Activated CD8-positive, alpha-beta T cell treated with anti-CD3 and anti-CD28 coated beads for 36 hours (primary cell): ENCODE measurements at regions of chr10 and their contacts with region 1.

Region 1: DNA sequence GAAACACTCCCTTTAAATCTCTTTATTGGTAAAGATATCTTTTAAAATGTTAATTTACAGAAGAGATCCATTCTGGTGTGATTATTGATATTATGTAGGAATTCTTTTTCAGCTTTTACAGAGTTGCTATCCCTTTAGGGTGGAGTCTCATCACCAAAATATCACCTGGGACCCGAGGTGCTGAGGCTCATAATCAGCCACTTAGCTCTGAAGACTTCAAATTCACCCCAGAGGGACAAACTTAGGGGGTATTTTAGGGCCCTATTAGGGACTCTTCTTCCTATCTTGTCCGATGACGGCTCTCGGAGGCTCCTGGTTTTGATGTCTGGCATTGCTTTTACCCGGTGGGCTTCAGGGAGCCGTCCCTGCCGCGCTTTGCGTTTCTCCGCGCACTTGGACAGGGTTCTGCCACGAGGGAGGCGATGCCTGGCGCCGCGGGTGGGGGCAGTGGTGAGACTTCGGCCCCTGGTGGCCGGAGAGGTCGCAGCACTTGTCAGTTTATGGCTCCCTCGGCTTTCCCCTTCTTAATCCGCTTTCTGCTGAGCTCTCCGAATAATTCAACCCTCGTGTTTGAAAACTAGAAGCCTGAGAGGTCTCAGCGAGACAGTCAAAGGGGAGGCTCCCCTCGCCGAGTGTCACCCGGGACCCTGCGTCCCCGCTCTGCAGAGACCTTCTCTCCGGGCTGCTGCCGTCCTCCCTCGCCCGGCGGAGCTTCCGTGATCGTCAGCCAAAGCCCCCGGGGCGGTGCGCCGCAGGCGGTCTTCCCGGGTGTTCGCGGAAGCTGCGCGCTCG is 27.8 kb downstream of the RBM20 start:
- DNase-seq: peak; percentile 82
- ATAC-seq: peak; percentile 97
- H3K4me3 Mint-ChIP-seq: peak overlapping the region; percentile 80
- H3K27ac Mint-ChIP-seq: peak overlapping the region; percentile 82
- H3K4me1 Mint-ChIP-seq: peaks cover 4% of the 10 kb centered on the region
- H3K27me3 Mint-ChIP-seq: peaks cover 3% of the 10 kb centered on the region
- CTCF ChIP-seq: peak; percentile 83

Region 2: GRCh38 chr10:110617425-110618229 is 54.4 kb before region 1 on chr10:
- CTCF ChIA-PET with region 1: interaction called, 81 read pairs
- POLR2A ChIA-PET with region 1: interaction called, 9 read pairs
- intact Hi-C with region 1: loop called (anchors 2 kb)
- DNase-seq: peak; percentile 61
- ATAC-seq: peak; percentile 61
- H3K4me3 Mint-ChIP-seq: no peak overlapping the region
- H3K27ac Mint-ChIP-seq: peak overlapping the region; percentile 91
- H3K4me1 Mint-ChIP-seq: peaks cover 64% of the 10 kb centered on the region
- H3K27me3 Mint-ChIP-seq: no peaks in the 10 kb centered on the region
- CTCF ChIP-seq: no peak

Region 3: GRCh38 chr10:110657968-110658691 is 13.9 kb before region 1 on chr10:
- CTCF ChIA-PET with region 1: interaction called, 31 read pairs
- POLR2A ChIA-PET with region 1: no interaction called
- intact Hi-C with region 1: no loop called
- DNase-seq: no peak
- ATAC-seq: no peak
- H3K4me3 Mint-ChIP-seq: no peak overlapping the region
- H3K27ac Mint-ChIP-seq: no peak overlapping the region
- H3K4me1 Mint-ChIP-seq: peaks cover 5% of the 10 kb centered on the region
- H3K27me3 Mint-ChIP-seq: peaks cover 18% of the 10 kb centered on the region
- CTCF ChIP-seq: no peak

Region 4: GRCh38 chr10:111034598-111035310 is 362.8 kb after region 1 on chr10:
- CTCF ChIA-PET with region 1: no interaction called
- POLR2A ChIA-PET with region 1: no interaction called
- intact Hi-C with region 1: no loop called
- DNase-seq: no peak
- ATAC-seq: no peak
- H3K4me3 Mint-ChIP-seq: no peak overlapping the region
- H3K27ac Mint-ChIP-seq: no peak overlapping the region
- H3K4me1 Mint-ChIP-seq: peaks cover 8% of the 10 kb centered on the region
- H3K27me3 Mint-ChIP-seq: peaks cover 2% of the 10 kb centered on the region
- CTCF ChIP-seq: no peak